Kidney (tissue), 22 donors: ENCODE measurements at regions of chr2 and their contacts with region 1.

Region 1: GRCh38 chr2:18378020-18378653 is 182.3 kb downstream of the RDH14 start:
- DNase-seq: peak in 4 of 5 donors; percentile 38 to 79 (median 56)
- H3K4me3 ChIP-seq: no peak overlapping the region
- H3K27ac ChIP-seq: no peak overlapping the region
- H3K4me1 ChIP-seq: no peaks in the 10 kb centered on the region
- H3K27me3 ChIP-seq: no peaks in the 10 kb centered on the region
- CTCF ChIP-seq: peak; percentile 75

Region 2: GRCh38 chr2:17851731-17852585 is 526.2 kb before region 1 on chr2:
- intact Hi-C with region 1: loop called (anchors 10 kb)
- DNase-seq: peak; percentile 41 to 71 (median 54)
- H3K4me3 ChIP-seq: no peak overlapping the region
- H3K27ac ChIP-seq: no peak overlapping the region
- H3K4me1 ChIP-seq: no peaks in the 10 kb centered on the region
- H3K27me3 ChIP-seq: no peaks in the 10 kb centered on the region
- CTCF ChIP-seq: peak; percentile 89